ENCODE measurements at regions of chr6 and their contacts with region 1.

Region 1: DNA sequence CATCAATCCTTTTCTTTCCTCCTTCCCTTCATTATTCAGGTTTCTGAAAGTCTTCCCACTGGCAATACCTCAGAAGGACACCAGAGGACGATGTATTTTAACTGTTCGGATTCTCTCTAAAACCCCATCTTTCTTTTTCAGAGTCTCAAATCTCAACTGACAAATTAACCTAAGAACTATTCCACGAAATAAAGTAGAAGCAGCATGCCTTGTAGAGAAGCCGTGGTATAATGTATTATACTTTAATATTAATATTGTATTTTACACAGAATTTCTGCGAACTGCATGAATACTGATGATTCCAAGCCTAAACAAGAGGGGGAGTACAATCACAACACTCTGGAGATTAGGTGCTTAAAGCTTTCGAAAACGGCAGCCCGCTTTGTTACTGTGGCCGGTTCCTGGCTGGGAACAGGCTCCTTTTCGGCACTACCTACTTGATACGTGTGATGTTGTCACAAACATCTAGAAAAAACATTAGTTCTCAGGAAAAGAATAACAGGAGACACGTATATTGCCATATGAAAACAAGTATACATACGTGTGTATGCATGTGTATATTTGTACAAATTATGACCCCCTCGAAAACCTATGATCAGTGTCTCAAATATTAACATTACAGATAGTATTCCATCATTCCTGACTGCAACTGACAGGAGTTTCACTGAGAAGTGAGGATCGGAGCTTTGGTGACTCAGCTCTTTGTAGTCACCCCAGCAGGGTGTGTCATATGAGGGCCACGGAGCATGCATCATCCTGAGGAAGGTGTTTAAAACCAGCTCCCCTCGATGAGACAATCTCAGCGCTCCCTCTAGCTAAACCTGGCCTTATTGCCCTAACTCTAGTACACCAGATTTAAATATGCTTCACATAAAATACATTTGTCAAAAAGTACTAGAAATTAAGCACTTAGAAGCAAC is 319.7 kb upstream of the TCF21 start:
- DNase-seq: peak; percentile 50
- H3K4me3 ChIP-seq: peak overlapping the region; percentile 46
- CTCF ChIP-seq: peak; percentile 76

Region 2: GRCh38 chr6:133590814-133591213 is 21.6 kb after region 1 on chr6:
- CTCF ChIA-PET with region 1: interaction called, 17 read pairs
- POLR2A ChIA-PET with region 1: no interaction called
- DNase-seq: no peak
- H3K4me3 ChIP-seq: no peak overlapping the region
- CTCF ChIP-seq: no peak

Region 3: GRCh38 chr6:133644892-133645619 is 75.8 kb after region 1 on chr6:
- CTCF ChIA-PET with region 1: interaction called, 19 read pairs
- POLR2A ChIA-PET with region 1: no interaction called
- DNase-seq: no peak
- H3K4me3 ChIP-seq: no peak overlapping the region
- CTCF ChIP-seq: no peak

Region 4: DNA sequence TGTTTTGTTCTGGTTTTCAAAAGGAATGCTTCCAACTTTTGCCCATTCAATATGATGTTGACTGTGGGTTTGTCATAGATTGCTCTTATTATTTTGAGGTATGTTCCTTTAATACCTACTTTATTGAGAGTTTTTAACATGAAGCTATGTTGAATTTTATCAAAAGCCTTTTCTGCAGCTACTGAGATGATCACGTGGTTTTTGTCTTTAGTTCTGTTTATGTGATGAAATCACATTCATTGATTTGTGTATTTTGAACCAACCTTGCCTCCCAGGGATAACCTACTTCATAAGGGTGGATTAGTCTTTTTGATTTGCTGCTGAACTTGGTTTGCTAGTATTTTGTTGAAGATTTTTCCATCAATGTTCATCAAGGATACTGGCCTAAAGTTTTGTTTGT is 227.0 kb after region 1 on chr6:
- CTCF ChIA-PET with region 1: interaction called, 10 read pairs
- POLR2A ChIA-PET with region 1: no interaction called
- DNase-seq: no peak
- H3K4me3 ChIP-seq: no peak overlapping the region
- CTCF ChIP-seq: no peak

Region 5: GRCh38 chr6:133837801-133838349 is 268.6 kb after region 1 on chr6:
- CTCF ChIA-PET with region 1: interaction called, 166 read pairs
- POLR2A ChIA-PET with region 1: interaction called, 3 read pairs
- DNase-seq: no peak
- H3K4me3 ChIP-seq: peak overlapping the region; percentile 50
- CTCF ChIP-seq: peak; percentile 63

Measured in AG04449 (cell line).